PC-3 (cell line): ENCODE measurements at regions of chr2 and their contacts with region 1.

Region 1: GRCh38 chr2:236748801-236749200 is 179.2 kb downstream of the ACKR3 start:
- DNase-seq: no peak
- ATAC-seq: peak; percentile 9
- H3K4me3 ChIP-seq: no peak overlapping the region
- H3K27ac ChIP-seq: peak overlapping the region; percentile 66
- H3K4me1 ChIP-seq: peaks cover 67% of the 10 kb centered on the region
- H3K27me3 ChIP-seq: no peaks in the 10 kb centered on the region
- CTCF ChIP-seq: no peak

Region 2: GRCh38 chr2:236663287-236664101 is 85.3 kb before region 1 on chr2:
- CTCF ChIA-PET with region 1: no interaction called
- POLR2A ChIA-PET with region 1: no interaction called
- intact Hi-C with region 1: loop called (anchors 1 kb)
- DNase-seq: no peak
- ATAC-seq: no peak
- H3K4me3 ChIP-seq: no peak overlapping the region
- H3K27ac ChIP-seq: no peak overlapping the region
- H3K4me1 ChIP-seq: peaks cover 33% of the 10 kb centered on the region
- H3K27me3 ChIP-seq: no peaks in the 10 kb centered on the region
- CTCF ChIP-seq: no peak

Region 3: GRCh38 chr2:236849508-236849907 is 100.7 kb after region 1 on chr2:
- CTCF ChIA-PET with region 1: no interaction called
- POLR2A ChIA-PET with region 1: interaction called, 36 read pairs
- intact Hi-C with region 1: no loop called
- DNase-seq: no peak
- ATAC-seq: no peak
- H3K4me3 ChIP-seq: no peak overlapping the region
- H3K27ac ChIP-seq: no peak overlapping the region
- H3K4me1 ChIP-seq: no peaks in the 10 kb centered on the region
- H3K27me3 ChIP-seq: no peaks in the 10 kb centered on the region
- CTCF ChIP-seq: no peak